ENCODE measurements at regions of chr16 and their contacts with region 1.

Region 1: GRCh38 chr16:28924732-28925385 is at the start of gene RABEP2:
- DNase-seq: peak; percentile 84 to 93
- H3K4me3 ChIP-seq: peak within 1 kb of the TSS; percentile 68 to 86
- H3K27ac ChIP-seq: peak within 1 kb of the TSS; percentile 93 to 98
- H3K4me1 ChIP-seq: peaks cover 0 to 12% (median 8%) of the 10 kb centered on the region in 4 donors
- H3K27me3 ChIP-seq: no peaks in the 10 kb centered on the region
- CTCF ChIP-seq: no peak

Region 2: DNA sequence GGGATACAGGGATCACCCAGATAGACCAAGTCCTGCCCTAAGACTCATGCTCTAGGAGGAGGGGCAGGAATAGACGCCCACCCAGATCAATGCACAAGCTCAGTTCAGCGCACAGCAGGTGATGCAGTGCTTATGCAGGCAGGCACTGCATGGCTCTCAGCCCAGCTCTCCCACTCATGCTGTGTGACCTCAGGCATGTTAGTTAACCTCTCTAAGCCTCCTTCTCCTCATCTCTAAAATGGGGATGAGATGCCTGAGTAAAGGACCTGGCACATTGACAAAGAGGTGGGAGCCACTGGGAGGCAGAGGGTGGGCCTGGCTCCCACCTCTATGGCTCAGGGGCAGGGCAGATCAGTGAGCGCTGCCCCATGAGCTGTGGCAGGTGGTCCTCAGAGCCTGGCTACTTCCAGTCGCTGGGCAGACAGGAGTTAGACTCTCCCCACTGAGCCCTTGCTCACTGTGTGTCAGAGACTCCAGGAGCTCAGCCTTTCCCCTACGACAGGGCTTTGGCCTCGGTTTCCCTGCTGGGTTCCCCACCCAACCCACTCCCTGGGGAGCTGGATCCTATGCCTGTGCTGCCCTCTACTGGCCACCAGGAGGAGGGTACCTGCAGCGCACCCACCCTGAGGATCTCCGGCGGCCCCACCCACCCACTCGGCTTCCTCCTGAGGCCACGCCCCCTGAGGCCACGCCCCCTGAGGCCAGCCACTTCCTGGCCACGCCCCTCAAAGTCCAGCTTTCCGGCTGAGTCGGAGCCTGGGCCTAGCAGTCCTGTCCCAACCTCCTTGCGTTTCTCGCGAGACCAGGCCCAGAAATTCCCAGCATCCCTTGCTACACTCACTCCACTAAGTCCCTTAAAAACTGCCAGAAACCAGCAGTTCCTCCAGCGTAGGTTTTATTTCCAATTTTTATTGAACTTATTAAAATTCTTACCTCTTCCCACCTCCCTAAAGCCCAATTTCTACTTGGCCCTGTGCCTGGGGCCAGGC is 1057.4 kb before region 1 on chr16:
- intact Hi-C with region 1: no loop called
- DNase-seq: peak in 1 of 2 donors; percentile 23
- H3K4me3 ChIP-seq: no peak overlapping the region
- H3K27ac ChIP-seq: no peak overlapping the region
- H3K4me1 ChIP-seq: no peaks in the 10 kb centered on the region
- H3K27me3 ChIP-seq: no peaks in the 10 kb centered on the region
- CTCF ChIP-seq: no peak

Region 3: DNA sequence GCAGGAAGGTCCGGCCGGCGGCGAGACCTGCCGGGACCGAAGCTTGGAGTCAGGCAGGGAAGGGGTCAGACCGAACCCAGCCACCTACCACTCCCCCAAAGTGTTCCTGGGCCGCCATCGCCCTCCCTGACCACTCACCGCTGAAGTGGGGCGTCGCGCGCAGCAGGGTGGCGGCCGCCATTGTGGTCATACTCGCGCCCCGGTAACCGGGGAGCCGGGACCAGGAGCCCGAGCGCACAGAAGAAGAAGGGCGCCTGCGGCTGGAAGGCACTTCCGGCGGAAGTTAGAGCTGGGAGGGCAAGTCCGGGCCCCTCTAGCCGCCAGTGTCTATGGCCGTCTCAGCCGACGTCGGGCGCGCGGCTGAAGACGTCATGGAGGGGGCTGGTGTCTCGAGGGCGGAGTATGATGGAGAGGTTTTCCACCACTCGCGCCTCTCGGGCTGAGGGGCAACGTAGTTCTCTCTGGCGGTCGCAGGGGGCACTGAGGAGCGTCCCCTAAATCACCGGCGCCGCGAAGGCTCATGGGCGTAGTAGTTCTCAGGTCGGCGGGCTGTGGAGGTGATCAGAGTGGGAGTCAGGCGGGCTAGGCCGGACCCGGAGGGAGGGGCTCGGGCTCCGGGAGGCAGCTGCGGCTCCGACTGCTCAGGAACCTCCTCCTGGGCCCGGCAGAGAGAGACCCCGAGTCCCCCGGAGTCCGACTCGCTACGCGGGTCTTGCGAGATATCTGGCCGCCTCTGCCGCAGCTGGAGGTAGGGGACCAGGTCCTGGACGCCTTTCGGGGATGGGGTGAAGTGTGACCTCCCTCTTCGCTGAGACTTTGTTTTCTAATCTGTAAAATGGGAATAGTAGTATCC is 78.6 kb before region 1 on chr16 and contains the start of gene TUFM:
- intact Hi-C with region 1: loop called (anchors 2 kb)
- DNase-seq: peak; percentile 98 to 99
- H3K4me3 ChIP-seq: peak within 1 kb of the TSS; percentile 69 to 78
- H3K27ac ChIP-seq: peak within 1 kb of the TSS; percentile 88 to 95
- H3K4me1 ChIP-seq: peaks cover 0 to 28% (median 19%) of the 10 kb centered on the region in 4 donors
- H3K27me3 ChIP-seq: no peaks in the 10 kb centered on the region
- CTCF ChIP-seq: peak; percentile 69 to 79

Region 4: GRCh38 chr16:28863929-28864793 is 60.7 kb before region 1 on chr16:
- intact Hi-C with region 1: loop called (anchors 5 kb)
- DNase-seq: no peak
- H3K4me3 ChIP-seq: peak overlapping the region; percentile 87 to 97
- H3K27ac ChIP-seq: peak overlapping the region; percentile 87 to 94
- H3K4me1 ChIP-seq: peaks cover 0 to 32% (median 16%) of the 10 kb centered on the region in 4 donors
- H3K27me3 ChIP-seq: no peaks in the 10 kb centered on the region
- CTCF ChIP-seq: no peak

Measured in tibial artery (tissue), 4 donors.